Activated T-helper 2 cell treated with anti-CD3 and anti-CD28 coated beads, Interferon-gamma antibody, Interleukin-2, Interleukin-4, amounts not matched to agents 10 μg/mL and 5 μg/mL and 100 μg/mL, durations not matched to agents 14 hours and 24 hours and 36 hours (primary cell): ENCODE measurements at regions of chr5 and their contacts with region 1.

Region 1: DNA sequence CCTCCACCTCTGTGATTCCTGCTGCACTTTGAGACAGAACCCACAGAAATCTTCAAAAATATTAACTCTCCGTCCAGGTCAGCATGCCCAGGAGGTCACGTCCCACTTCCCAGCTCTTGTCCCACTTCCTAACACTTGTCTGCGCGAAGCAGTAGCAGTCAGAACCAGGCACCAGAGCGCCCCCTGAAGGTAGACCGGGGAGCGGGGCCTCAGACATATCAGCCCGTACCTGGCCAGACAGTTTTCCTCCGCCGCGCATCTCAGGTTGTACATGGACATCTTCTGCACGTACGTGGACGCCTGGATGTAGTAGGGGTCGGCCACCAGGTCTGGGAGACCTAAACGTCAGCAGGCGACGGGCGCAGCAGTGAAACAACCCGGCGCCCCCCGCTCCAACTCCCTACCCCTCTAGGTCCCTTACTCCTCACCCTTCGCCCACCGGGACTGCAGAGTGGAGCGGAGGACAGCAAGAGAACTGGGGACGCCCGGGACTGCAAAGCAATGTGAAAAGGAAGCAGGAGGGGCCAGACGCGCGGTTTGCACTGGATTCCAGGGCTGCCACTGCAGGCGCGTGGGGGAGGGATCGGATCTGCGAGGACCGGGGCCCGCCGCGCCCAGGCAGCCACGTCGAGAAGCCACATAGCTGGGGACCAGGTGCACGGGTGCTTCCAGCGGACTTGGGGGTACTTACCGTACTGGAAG is 1.2 kb downstream of the LOX start:
- DNase-seq: peak; percentile 11
- H3K4me3 Mint-ChIP-seq: peak overlapping the region; percentile 56
- H3K27ac Mint-ChIP-seq: no peak overlapping the region
- H3K4me1 Mint-ChIP-seq: peaks cover 9% of the 10 kb centered on the region
- H3K27me3 Mint-ChIP-seq: peaks cover 60% of the 10 kb centered on the region

Region 2: GRCh38 chr5:121962347-121962670 is 114.5 kb before region 1 on chr5:
- intact Hi-C with region 1: loop called (anchors 5 kb)
- DNase-seq: no peak
- H3K4me3 Mint-ChIP-seq: peak overlapping the region; percentile 95
- H3K27ac Mint-ChIP-seq: peak overlapping the region; percentile 91
- H3K4me1 Mint-ChIP-seq: peaks cover 27% of the 10 kb centered on the region
- H3K27me3 Mint-ChIP-seq: no peaks in the 10 kb centered on the region

Region 3: DNA sequence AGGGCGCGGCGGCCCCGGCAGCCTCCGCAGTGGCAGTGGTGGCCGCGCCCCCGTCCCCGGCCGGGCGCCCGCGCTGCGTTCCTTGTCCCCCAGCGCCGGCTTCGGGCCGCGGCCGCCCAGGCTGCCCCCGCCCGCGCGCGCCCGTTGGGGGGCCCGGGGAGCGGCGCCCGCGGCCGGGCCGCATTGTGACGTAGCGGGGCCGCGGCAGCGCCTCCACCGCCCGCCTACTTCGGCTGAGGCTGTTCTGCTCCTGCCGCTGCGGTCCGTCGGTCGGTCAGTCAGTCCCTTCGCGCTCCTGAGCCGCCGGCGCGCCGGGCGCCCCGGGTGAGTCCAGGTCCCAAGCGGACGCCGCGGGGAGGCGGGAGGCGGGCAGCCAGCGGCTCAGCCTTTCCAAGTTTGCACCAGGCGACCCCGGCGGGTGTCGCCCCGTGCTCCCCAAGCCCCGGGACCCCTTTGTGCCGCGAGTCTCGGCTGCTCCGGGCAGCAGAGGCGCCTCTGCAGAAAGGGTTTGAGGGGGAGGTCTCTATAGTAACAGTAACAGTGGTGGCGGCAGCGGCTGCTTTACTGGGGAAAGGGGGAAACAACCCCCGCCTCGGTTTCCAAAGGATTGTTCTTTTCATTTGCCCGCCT is 235.3 kb after region 1 on chr5 and contains the start of gene SNCAIP:
- intact Hi-C with region 1: loop called (anchors 10 kb)
- DNase-seq: no peak
- H3K4me3 Mint-ChIP-seq: peak within 1 kb of the TSS; percentile 33
- H3K27ac Mint-ChIP-seq: no peak within 1 kb of the TSS
- H3K4me1 Mint-ChIP-seq: peaks cover 2% of the 10 kb centered on the region
- H3K27me3 Mint-ChIP-seq: peaks cover 53% of the 10 kb centered on the region
- total RNA-seq, gene SNCAIP: not detected in 2 replicates

Region 4: GRCh38 chr5:122761115-122761514 is 684.3 kb after region 1 on chr5:
- intact Hi-C with region 1: no loop called
- DNase-seq: no peak
- H3K4me3 Mint-ChIP-seq: no peak overlapping the region
- H3K27ac Mint-ChIP-seq: no peak overlapping the region
- H3K4me1 Mint-ChIP-seq: peaks cover 15% of the 10 kb centered on the region
- H3K27me3 Mint-ChIP-seq: no peaks in the 10 kb centered on the region